Cardiac septum (tissue), 1 donor: ENCODE measurements at regions of chr11 and their contacts with region 1.

Region 1: GRCh38 chr11:59668950-59669610 is at the start of gene PATL1:
- DNase-seq: peak; percentile 100
- total RNA-seq, gene PATL1: 23.4 TPM

Region 2: GRCh38 chr11:59560702-59561469 is 108.2 kb before region 1 on chr11:
- intact Hi-C with region 1: loop called (anchors 2 kb)
- DNase-seq: peak; percentile 88

Region 3: GRCh38 chr11:59615637-59616395 is 53.3 kb before region 1 on chr11 and contains the start of gene OSBP:
- intact Hi-C with region 1: loop called (anchors 5 kb)
- DNase-seq: peak; percentile 99
- total RNA-seq, gene OSBP: 35.1 TPM

Region 4: DNA sequence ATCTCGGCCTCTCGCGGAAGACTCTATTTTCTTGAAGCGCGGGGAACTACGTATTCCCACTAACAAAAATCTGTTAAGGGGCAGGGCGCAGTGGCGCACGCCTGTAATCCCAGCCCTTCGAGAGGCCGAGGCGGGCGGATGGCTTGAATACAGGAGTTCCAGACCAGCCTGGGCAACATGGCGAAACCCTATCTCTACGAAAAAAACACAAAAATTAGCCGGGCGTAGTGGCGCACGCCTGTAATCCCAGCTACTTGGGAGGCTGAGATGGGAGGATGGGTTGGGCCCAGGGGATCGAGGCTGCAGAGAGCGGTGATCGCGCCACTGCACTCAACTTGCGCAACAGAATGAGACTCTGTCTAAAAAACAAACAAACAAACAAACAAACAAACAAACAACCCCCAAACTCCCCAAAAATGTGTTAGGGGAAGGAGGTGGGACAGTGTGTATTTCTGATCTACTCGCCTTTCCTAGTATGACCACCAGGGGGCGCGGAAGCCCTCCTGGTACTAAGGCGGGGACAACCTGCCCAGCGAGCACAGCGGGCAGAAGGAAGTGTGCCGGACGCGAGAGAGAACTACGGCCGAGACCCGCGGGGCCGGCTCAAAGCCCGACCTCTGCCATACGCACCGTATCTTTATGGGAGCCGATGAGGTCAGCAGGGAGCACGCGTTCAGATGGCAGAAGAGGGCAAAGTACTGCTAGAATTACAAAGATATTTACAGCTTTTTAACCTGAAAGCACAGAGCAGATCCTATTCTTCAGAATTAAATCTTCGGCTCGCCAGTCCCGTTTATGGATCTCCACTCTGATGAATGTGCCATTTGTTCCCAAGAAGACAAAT is 84.8 kb after region 1 on chr11:
- intact Hi-C with region 1: loop called (anchors 1 kb)
- DNase-seq: peak; percentile 94

Region 5: GRCh38 chr11:59802639-59803176 is 133.6 kb after region 1 on chr11:
- intact Hi-C with region 1: loop called (anchors 10 kb)
- DNase-seq: no peak